HCT116 (cell line): ENCODE measurements at regions of chr18 and their contacts with region 1.

Region 1: DNA sequence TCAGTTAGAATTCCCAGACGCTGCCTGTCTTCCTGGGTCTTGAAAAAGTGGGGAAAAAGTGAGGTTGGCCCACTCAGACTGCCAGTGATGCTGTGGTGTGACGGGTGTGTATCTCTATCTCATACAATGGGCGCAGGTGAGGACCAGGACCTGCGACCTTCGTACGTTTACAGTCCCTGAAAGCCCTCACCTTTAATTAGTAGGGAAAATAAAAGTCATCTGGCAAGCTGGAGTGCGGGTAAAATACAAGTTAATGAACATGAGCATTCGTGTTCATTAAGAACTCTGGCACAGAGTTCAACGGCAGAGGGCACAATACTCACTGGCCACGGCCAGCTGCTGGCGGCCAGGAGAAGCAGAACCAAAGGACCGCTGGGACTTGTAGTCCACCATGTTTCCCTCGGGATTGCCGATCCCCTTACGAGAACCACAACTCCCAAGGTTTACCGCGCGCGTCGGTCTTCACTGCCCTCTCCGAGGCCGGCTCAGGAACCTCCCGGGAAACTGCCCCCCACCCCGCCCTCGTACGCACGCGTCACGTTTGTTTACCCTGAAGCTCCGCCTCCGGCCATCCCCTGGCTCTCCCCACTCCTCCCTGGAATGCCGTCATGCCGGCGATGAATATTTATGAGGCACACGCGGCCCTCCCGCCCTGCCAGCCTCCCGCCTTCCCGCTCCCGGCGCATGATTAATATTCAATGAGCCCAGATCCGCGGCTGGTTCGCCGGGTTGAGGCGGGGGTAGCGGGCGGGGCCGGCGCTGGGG is 488 bp upstream of the PHLPP1 start:
- DNase-seq: peak; percentile 99
- ATAC-seq: peak; percentile 90
- H3K4me3 ChIP-seq: peak overlapping the region; percentile 51 to 59
- H3K27ac ChIP-seq: no peak overlapping the region
- H3K4me1 ChIP-seq: peaks cover 8 to 27% of the 10 kb centered on the region in 2 experiments
- H3K27me3 ChIP-seq: no peaks in the 10 kb centered on the region
- CTCF ChIP-seq: peak in 2 of 3 experiments; percentile 72 to 77; a peak in 4 of 6 replicates
- POLR2A ChIP-seq: no peak
- RAD21 ChIP-seq: no peak

Region 2: DNA sequence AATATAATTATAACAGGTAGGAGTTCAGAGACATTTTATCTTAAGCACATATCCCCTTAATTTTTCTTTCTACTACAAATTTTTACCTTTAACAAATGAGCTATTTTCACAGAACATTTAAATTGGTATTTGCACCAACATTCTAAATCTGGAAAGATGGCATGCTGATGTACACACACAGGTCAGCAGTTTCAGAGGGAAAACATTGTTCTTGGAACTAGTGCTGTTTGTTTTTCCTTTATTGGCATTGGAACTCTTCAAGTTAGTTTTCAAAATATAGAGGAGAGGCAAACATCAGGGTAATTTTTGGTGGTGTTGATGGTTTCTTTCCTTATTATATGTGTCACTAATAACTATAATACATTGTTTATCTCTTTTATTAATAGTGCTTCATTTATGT is 155.8 kb after region 1 on chr18:
- CTCF ChIA-PET with region 1: no interaction called
- POLR2A ChIA-PET with region 1: no interaction called
- RAD21 ChIA-PET with region 1: interaction called in 1 of 2 experiments, 4 read pairs
- intact Hi-C with region 1: loop called (anchors 5 kb)
- DNase-seq: no peak
- ATAC-seq: no peak
- H3K4me3 ChIP-seq: no peak overlapping the region
- H3K27ac ChIP-seq: no peak overlapping the region
- H3K4me1 ChIP-seq: peaks cover 21 to 51% of the 10 kb centered on the region in 2 experiments
- H3K27me3 ChIP-seq: no peaks in the 10 kb centered on the region
- CTCF ChIP-seq: no peak
- POLR2A ChIP-seq: no peak
- RAD21 ChIP-seq: no peak

Region 3: DNA sequence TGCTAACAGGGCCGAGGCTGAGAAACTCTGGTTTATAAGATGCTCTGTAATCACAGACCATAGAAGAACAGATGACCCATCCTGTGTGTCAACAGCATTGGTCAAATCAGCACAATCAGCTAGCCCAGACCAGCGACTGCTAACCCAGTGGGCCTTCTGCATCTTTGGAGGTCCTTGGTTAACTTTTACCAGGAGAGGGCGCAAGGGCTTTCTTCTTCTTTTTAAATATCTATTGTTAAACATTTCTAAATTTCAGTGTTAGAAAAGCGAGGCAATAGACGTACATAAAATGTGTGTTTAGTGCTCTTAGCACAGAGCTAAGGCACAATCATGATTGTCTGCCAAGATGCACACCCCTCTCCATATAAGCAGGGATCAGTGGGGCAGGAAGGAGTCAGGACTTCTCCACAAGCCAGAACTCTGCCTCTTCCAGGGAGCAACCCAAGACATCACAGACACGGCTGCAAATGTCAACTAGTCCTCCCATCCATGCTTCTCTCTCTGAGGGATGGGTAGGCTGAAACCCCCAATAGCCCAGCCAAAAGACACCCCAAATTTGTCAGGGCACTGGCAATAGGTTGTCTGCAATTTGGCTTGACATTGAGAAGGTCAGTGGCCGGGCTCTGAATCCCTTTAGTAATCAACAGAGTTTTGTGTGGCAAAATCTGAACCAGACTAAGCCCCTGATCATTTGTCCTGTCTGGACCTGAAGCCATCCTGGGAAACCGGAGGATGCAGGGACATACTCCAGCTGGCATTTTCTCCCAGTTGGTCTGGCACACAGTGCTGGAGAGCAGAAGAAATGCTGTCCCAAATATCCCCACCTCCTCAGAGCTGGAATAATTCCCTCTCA is 416.5 kb after region 1 on chr18:
- CTCF ChIA-PET with region 1: no interaction called
- POLR2A ChIA-PET with region 1: no interaction called
- RAD21 ChIA-PET with region 1: no interaction called
- intact Hi-C with region 1: no loop called
- DNase-seq: no peak
- ATAC-seq: peak; percentile 77
- H3K4me3 ChIP-seq: no peak overlapping the region
- H3K27ac ChIP-seq: no peak overlapping the region
- H3K4me1 ChIP-seq: no peaks in the 10 kb centered on the region
- H3K27me3 ChIP-seq: peaks cover 4% of the 10 kb centered on the region; the same call in 1 of the 2 replicates
- CTCF ChIP-seq: peak; percentile 42 to 62 (median 52)
- POLR2A ChIP-seq: no peak
- RAD21 ChIP-seq: peak; percentile 65